Common myeloid progenitor, CD34-positive (primary cell): ENCODE measurements at regions of chr15 and their contacts with region 1.

Region 1: DNA sequence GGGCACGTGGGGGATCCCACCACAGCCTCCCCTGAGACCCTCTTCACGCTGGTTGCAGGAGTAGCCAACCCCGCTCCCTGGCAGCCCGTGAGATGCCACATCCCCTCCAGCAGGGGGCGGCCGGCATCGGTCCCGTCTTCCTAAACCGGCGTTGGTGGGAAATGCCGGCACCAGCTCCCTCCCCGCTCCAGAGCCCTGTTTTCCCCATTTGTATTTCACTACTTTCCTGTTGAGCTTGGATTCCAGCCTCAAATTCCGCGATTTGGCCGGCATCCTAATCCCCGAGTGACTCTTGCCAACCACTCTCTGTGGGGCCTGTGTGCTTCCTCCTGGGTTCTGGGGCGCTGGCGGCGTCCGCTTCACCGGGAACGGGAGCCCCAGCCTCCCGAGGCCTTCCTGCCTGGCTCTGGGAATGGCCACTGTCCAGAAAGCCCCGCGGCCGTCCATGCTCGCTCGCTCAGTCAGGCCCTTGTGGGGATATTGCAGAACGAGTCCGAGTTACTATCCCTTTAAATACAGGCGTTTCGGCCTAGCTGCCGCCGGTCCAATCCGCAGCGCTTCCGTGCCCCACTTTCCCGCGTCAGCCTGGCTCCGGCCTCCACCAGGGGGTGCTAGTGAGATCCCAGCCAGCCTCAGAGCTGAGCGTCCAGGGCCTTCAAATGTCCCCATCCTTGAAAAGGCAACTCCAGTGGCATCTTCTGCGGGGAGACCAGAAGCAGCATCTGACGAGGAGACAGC is 8.1 kb upstream of the ADAMTS17 start:
- DNase-seq: peak; percentile 81 to 82 (median 82)
- H3K4me3 ChIP-seq: peak overlapping the region; percentile 61 to 91 (median 78)
- H3K27ac ChIP-seq: peak overlapping the region in 1 of 2 experiments; percentile 70
- H3K4me1 ChIP-seq: peaks cover 0 to 8% (median 3%) of the 10 kb centered on the region in 4 experiments
- H3K27me3 ChIP-seq: peaks cover 0 to 32% (median 12%) of the 10 kb centered on the region in 5 experiments

Region 2: DNA sequence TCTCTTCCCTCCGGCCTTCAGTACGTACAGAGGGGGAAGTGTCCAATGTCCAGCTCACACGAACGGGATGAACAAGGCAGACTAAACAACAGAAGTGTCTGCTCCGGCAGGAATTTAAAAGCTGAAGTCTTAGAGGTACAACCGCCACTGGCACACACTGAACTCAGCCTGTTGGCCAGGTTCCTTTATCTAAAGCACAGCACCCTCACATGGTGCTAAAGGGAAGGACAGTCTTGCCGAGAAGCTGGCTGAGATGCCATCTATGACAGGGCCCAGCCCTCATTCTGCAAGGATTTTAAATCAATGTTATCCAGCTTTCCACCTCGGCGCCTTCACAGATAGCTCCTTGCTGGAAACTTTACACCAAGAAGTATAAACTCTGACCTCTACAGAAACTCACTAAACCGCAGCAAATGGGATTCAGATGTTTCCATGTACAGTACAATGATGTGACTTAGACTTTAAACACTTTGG is 10.9 kb before region 1 on chr15:
- CTCF ChIA-PET with region 1: interaction called, 47 read pairs
- POLR2A ChIA-PET with region 1: no interaction called
- DNase-seq: peak; percentile 34 to 67 (median 55)
- H3K4me3 ChIP-seq: no peak overlapping the region
- H3K27ac ChIP-seq: no peak overlapping the region
- H3K4me1 ChIP-seq: peaks cover 0 to 12% (median 7%) of the 10 kb centered on the region in 4 experiments
- H3K27me3 ChIP-seq: peaks cover 0 to 93% (median 27%) of the 10 kb centered on the region in 5 experiments